Activated CD4-positive, alpha-beta T cell treated with anti-CD3 and anti-CD28 coated beads for 36 hours (primary cell): ENCODE measurements at regions of chr19 and their contacts with region 1.

Region 1: GRCh38 chr19:36014029-36014924 is at the start of gene ALKBH6:
- DNase-seq: peak; percentile 100
- ATAC-seq: peak; percentile 98
- H3K4me3 Mint-ChIP-seq: peak within 1 kb of the TSS; percentile 96
- H3K27ac Mint-ChIP-seq: peak within 1 kb of the TSS; percentile 94
- H3K4me1 Mint-ChIP-seq: peaks cover 32% of the 10 kb centered on the region
- H3K27me3 Mint-ChIP-seq: no peaks in the 10 kb centered on the region
- total RNA-seq, gene ALKBH6: 40.6 to 42.2 TPM

Region 2: DNA sequence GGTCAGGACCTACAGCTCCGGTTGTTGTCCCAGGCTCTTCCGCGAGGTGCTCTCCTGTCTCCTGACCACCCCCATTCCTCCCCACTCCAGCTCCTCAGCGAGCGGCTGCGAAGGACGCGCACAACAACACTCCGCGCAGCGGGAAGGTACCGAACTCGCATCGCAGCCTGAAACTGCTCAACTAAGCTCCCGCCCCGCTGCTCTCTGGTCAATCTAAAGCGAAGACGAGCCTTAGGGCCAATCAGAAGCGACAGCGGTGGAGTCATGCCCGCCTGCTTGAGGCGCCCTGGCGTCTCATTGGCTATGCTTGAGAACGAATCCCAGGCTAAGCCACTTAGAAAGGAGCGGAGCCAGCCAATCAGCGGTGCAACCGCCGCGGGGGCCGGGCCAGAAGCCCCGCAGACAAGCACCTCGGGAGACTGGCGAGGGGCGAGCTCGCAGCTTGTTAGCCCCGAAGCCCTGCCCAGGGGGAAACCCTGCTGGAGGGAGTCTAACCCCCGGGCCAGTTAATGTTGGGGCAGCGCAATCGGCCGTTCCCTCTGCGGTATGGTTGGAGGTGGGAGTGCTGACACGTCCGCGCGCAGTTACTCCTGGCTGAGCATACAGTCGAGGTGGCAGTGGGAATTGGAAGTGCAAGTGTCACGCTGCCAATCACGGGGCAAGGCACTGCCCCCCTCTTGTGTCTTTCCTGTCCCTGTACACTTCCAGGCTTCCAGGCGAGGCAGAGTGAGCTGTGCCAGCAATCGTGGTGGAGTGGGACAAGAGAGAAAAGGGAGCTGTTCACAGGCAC is 311.9 kb before region 1 on chr19:
- CTCF ChIA-PET with region 1: no interaction called
- POLR2A ChIA-PET with region 1: no interaction called
- intact Hi-C with region 1: loop called in 1 of 2 experiments (anchors 1 kb)
- DNase-seq: peak; percentile 97
- ATAC-seq: peak; percentile 99
- H3K4me3 Mint-ChIP-seq: peak overlapping the region; percentile 83
- H3K27ac Mint-ChIP-seq: peak overlapping the region; percentile 99
- H3K4me1 Mint-ChIP-seq: peaks cover 8% of the 10 kb centered on the region
- H3K27me3 Mint-ChIP-seq: no peaks in the 10 kb centered on the region

Region 3: GRCh38 chr19:35757749-35758608 is 256.3 kb before region 1 on chr19 and contains the start of gene PROSER3:
- CTCF ChIA-PET with region 1: no interaction called
- POLR2A ChIA-PET with region 1: no interaction called
- intact Hi-C with region 1: loop called in 1 of 2 experiments (anchors 1 kb)
- DNase-seq: peak; percentile 99
- ATAC-seq: peak; percentile 98
- H3K4me3 Mint-ChIP-seq: peak within 1 kb of the TSS; percentile 85
- H3K27ac Mint-ChIP-seq: peak within 1 kb of the TSS; percentile 91
- H3K4me1 Mint-ChIP-seq: peaks cover 29% of the 10 kb centered on the region
- H3K27me3 Mint-ChIP-seq: peaks cover 4% of the 10 kb centered on the region
- total RNA-seq, gene PROSER3: 39.8 to 62.8 TPM

Region 4: DNA sequence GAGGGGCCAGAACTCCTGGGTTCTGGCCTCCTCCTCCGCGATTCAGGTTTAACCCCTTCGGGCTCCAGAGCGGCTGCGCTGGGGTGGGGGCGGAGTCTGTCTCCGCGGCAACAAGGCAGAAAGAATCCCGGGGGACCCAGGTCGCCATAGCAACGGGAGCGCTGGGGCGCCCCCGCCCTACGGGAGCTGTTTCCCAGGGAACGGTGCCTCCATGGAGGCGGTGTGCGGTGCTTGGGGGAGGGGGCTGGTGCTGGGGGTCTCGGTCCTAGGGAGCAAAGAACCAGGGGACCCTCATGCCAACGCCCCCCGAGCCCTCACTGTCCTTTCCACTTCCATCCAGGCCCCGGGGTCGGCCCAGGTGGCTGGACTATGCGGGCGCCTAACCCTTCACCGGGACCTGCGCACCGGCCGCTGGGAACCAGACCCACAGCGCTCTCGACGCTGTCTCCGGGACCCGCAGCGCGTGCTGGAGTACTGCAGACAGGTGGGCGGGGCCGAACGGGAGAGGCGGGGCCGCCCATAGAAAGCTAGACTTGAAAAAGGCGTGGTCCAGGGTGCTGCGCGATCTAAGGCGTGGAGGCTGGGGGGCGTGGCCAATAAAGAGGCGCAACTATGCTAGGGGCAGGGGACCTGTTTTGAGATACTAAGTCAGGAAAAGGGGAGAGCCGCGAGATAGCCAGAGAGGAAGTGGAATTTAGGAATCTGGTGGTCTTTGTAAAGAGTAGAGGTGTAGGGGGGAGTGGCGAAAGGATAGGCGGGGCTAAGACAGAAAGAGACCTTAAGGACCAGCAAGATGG is 144.8 kb before region 1 on chr19:
- CTCF ChIA-PET with region 1: no interaction called
- POLR2A ChIA-PET with region 1: interaction called, 3 read pairs
- intact Hi-C with region 1: loop called in 1 of 2 experiments (anchors 1 kb)
- DNase-seq: peak; percentile 95
- ATAC-seq: peak; percentile 93
- H3K4me3 Mint-ChIP-seq: peak overlapping the region; percentile 52
- H3K27ac Mint-ChIP-seq: no peak overlapping the region
- H3K4me1 Mint-ChIP-seq: peaks cover 14% of the 10 kb centered on the region
- H3K27me3 Mint-ChIP-seq: peaks cover 37% of the 10 kb centered on the region

Region 5: DNA sequence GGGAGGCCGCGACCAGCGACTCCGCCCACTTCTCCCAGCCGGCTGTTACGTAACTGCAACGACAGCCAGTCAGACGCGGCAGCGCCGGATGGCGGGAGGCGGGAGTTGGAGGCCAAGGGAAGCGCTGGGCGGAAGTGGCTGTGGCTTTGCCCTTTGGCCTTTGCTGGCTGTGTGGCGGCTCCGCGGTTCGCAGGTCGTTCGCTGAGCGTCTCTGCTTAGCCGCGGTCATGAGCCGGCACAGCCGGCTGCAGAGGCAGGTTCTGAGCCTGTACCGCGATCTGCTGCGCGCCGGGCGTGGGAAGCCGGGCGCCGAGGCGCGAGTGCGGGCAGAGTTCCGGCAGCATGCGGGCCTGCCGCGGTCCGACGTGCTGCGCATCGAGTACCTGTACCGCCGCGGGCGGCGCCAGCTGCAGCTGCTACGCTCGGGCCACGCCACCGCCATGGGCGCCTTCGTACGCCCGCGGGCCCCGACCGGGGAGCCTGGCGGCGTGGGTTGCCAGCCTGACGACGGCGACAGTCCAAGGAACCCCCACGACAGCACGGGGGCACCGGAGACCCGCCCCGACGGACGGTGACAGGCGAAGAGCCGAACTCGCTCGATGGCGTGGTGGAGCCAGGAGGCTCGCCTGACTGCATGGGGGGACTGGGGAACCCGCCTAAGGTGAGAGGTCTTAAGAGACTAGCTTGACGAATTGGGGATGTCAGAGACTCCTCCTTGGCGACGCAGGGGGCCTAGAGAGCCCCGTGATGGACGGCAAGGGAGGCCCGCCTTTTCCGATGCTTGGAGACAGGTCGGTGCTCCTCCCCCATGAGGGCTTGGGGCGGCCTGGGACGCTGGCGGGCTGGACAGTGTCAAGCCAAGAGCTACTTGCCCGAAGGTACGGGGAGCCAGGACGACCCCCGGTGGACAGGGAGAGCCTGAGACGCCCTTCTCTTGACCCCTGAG is 19.0 kb before region 1 on chr19 and contains the start of gene SDHAF1:
- CTCF ChIA-PET with region 1: interaction called, 7 read pairs
- POLR2A ChIA-PET with region 1: no interaction called
- intact Hi-C with region 1: loop called (anchors 1 kb)
- DNase-seq: peak; percentile 98
- ATAC-seq: peak; percentile 85
- H3K4me3 Mint-ChIP-seq: peak within 1 kb of the TSS; percentile 94
- H3K27ac Mint-ChIP-seq: peak within 1 kb of the TSS; percentile 96
- H3K4me1 Mint-ChIP-seq: peaks cover 34% of the 10 kb centered on the region
- H3K27me3 Mint-ChIP-seq: no peaks in the 10 kb centered on the region
- total RNA-seq, gene SDHAF1: 16.0 to 19.2 TPM